BJ (cell line): ENCODE measurements at regions of chr15 and their contacts with region 1.

Region 1: DNA sequence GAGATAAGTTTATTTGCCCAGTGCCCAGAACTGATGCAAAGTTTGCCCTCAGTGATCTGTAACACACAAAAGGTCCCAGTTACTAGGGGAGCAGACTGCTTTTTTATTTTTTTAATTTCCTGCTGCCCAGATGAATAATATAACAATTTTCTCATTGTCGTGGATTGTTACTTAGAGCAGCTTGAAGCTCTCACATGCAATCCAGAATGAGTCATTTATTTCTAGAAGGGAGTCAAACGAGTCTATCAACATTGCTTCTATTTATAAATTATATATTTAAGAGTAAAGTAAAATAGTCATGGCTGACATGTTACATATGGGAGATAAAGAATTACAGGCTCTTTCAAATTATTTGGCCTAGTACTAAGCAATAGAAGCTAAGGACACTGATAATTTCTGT is 41.3 kb downstream of the MEIS2 start:
- DNase-seq: no peak
- H3K4me3 ChIP-seq: no peak overlapping the region
- H3K27me3 ChIP-seq: no peaks in the 10 kb centered on the region
- CTCF ChIP-seq: no peak

Region 2: DNA sequence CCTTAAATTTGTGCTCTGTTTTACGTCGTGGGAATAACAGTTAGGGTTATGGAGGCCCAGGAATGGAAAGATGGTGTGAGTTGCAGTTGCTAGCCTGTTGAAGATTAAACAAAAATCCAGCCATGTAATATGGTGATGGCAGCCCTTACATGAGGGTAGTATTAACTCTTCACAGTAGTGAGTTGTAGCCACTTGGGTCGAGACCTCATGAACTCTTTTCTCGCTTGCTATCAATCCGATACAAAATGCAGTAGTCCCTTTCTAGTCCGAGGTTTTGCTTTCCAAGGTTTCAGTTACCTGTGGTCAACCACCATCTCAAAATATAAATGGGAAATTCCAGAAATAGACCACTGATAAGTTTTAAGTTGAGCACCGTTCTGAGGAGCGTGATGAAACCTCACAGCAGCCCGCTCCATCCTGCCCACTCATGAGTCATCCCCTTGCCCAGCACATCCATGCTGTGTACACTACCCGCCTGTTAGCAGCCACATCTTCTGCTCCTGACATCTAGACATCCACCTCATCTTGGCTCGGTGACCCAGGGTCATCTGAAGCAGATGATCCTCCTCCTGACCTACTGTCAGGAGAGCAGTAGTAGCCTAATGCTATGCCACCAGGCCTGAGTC is 301.8 kb before region 1 on chr15:
- CTCF ChIA-PET with region 1: no interaction called
- POLR2A ChIA-PET with region 1: no interaction called
- DNase-seq: no peak
- H3K4me3 ChIP-seq: no peak overlapping the region
- H3K27me3 ChIP-seq: no peaks in the 10 kb centered on the region
- CTCF ChIP-seq: no peak

Region 3: DNA sequence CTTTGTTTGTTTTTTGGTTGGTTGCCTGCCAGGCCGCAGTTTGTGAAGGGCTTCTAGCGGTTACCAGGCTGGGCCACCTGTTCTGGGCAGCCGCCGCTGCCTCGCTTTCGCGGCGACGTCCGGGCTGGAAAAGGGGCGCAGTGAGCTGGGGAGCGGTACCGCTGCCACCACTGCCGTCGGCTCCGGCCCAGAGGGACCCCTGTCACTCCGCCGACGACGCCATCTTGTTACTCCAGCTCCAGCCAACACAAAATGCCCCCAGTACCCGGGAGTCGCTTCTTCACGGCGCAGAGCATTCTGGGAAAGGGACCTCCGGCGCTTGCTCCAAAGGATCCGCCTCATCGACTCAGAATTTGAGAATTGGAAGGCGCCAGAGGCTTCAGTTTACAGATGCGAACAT is 240.8 kb before region 1 on chr15:
- CTCF ChIA-PET with region 1: no interaction called
- POLR2A ChIA-PET with region 1: no interaction called
- DNase-seq: no peak
- H3K4me3 ChIP-seq: no peak overlapping the region
- H3K27me3 ChIP-seq: no peaks in the 10 kb centered on the region
- CTCF ChIP-seq: no peak

Region 4: DNA sequence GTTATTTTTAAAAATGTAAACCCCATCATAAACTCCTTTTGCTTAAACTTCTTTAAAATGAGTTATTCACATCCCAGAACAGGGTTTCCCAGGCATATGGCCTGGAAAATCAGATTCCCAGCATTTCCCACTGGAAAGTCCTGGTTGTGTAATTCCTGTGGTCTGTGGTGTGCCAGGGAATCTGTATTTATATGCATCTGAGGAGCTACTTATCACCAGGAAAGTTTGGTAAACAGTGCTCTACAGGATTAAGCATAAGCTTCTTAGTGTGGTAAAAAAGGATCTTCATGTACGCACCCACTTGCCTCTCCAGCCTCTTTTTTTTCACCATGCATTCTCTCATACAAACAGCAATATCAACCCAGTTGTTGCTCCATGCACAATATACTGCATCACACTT is 13.1 kb after region 1 on chr15:
- CTCF ChIA-PET with region 1: interaction called, 11 read pairs
- POLR2A ChIA-PET with region 1: no interaction called
- DNase-seq: no peak
- H3K4me3 ChIP-seq: no peak overlapping the region
- H3K27me3 ChIP-seq: no peaks in the 10 kb centered on the region
- CTCF ChIP-seq: no peak